Panc1 (cell line): ENCODE measurements at regions of chr1 and their contacts with region 1.

Region 1: DNA sequence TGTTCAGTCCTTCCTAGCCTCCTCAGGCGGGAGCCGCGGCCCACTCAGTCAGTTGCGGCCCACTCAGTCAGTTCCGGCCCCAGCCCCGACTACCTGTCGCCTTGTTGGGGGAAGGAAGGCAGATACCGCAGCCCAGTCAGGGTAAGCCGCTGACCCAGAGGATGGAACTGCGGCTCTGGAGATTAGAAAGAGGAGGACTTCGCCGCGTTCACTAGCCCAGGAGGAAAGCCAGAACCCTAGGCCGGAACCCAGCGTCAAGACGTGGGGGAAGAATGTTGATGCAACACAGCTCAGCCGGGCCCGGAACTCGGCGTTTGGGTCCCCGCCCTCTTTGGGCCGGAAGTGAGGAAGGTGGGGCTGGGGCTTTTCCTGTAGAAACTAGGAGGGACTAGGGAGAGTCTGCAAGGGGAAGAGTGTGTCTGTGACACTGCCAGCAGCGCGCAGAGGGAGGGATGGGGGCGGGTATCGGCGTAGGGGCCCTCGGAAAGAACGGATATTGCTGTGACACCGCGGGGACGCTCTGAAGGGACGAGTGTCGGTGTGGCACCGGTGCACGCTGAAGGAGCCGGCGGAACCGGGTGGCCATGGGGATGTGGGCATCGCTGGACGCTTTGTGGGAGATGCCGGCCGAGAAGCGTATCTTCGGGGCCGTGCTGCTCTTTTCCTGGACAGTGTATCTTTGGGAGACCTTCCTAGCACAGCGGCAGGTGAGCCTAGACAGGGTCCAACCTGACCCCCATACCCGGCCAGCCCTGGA is at the start of gene ZMPSTE24:
- DNase-seq: peak; percentile 86
- ATAC-seq: peak; percentile 99
- H3K4me3 ChIP-seq: peak within 1 kb of the TSS; percentile 88 to 100
- H3K27ac ChIP-seq: peak within 1 kb of the TSS; percentile 94
- H3K4me1 ChIP-seq: peaks cover 9% of the 10 kb centered on the region
- H3K27me3 ChIP-seq: no peaks in the 10 kb centered on the region
- CTCF ChIP-seq: no peak
- total RNA-seq, gene ZMPSTE24: 65.4 TPM

Region 2: GRCh38 chr1:39737546-39738169 is 520.2 kb before region 1 on chr1:
- CTCF ChIA-PET with region 1: no interaction called
- POLR2A ChIA-PET with region 1: no interaction called
- in situ Hi-C with region 1: no loop called
- intact Hi-C with region 1: no loop called
- DNase-seq: no peak
- ATAC-seq: no peak
- H3K4me3 ChIP-seq: no peak overlapping the region
- H3K27ac ChIP-seq: no peak overlapping the region; the same call in 1 of the 2 replicates
- H3K4me1 ChIP-seq: peaks cover 5% of the 10 kb centered on the region
- H3K27me3 ChIP-seq: no peaks in the 10 kb centered on the region
- CTCF ChIP-seq: no peak

Region 3: DNA sequence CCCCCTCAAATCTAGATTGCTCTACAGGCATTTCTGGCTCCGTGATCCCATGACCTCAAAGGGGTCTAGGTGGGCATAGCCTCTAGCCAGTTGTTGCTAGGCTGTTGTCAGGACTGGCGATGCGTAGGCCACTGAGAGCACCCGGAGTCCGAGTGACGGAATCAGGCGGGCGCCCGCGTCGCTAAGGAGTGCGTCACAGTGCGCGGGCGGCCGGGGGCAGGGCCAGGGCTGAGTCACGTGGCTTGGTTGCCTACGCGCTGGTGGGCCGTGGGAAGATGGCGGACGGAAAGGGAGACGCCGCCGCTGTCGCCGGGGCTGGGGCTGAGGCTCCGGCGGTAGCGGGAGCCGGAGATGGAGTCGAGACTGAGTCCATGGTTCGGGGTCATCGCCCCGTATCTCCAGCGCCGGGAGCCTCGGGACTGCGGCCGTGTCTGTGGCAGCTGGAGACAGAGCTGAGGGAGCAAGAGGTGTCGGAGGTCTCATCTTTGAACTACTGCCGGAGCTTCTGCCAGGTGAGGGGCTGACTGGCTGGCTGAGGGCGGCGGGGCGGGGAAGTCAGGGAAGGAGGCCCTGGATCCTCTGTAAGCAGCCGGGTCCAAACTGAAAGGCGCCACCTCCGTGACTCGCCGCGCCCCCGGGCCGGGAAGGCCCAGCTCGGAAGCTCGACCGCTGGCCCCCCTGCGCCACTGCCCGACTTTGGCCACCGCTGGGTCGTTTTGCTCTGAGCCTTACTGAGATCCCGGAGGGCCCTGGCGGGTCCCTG is 96.6 kb before region 1 on chr1 and contains the start of gene RLF:
- CTCF ChIA-PET with region 1: interaction called, 7 read pairs
- POLR2A ChIA-PET with region 1: no interaction called
- in situ Hi-C with region 1: no loop called
- intact Hi-C with region 1: loop called (anchors 10 kb)
- DNase-seq: peak; percentile 62
- ATAC-seq: peak; percentile 99
- H3K4me3 ChIP-seq: peak within 1 kb of the TSS; percentile 62 to 98
- H3K27ac ChIP-seq: peak within 1 kb of the TSS; percentile 97
- H3K4me1 ChIP-seq: peaks cover 9% of the 10 kb centered on the region; the same call in 1 of the 2 replicates
- H3K27me3 ChIP-seq: no peaks in the 10 kb centered on the region
- CTCF ChIP-seq: no peak
- total RNA-seq, gene RLF: 15.7 TPM

Region 4: GRCh38 chr1:40197656-40198055 is 60.2 kb before region 1 on chr1:
- CTCF ChIA-PET with region 1: no interaction called
- POLR2A ChIA-PET with region 1: interaction called, 3 read pairs
- in situ Hi-C with region 1: no loop called
- intact Hi-C with region 1: loop called (anchors 10 kb)
- DNase-seq: no peak
- ATAC-seq: no peak
- H3K4me3 ChIP-seq: no peak overlapping the region
- H3K27ac ChIP-seq: no peak overlapping the region
- H3K4me1 ChIP-seq: no peaks in the 10 kb centered on the region
- H3K27me3 ChIP-seq: no peaks in the 10 kb centered on the region
- CTCF ChIP-seq: no peak; the same call in 1 of the 2 replicates